ENCODE measurements at regions of chr13 and their contacts with region 1.

Region 1: GRCh38 chr13:78430166-78430791 is 173.1 kb downstream of the POU4F1 start:
- DNase-seq: no peak

Region 2: GRCh38 chr13:78383071-78383484 is 47.2 kb before region 1 on chr13:
- intact Hi-C with region 1: no loop called
- DNase-seq: no peak

Region 3: GRCh38 chr13:78476910-78477309 is 46.6 kb after region 1 on chr13:
- intact Hi-C with region 1: loop called in 1 of 2 experiments (anchors 2 kb)
- DNase-seq: no peak

Measured in posterior vena cava (tissue), 2 donors.